ENCODE measurements at regions of chr4 and their contacts with region 1.

Region 1: DNA sequence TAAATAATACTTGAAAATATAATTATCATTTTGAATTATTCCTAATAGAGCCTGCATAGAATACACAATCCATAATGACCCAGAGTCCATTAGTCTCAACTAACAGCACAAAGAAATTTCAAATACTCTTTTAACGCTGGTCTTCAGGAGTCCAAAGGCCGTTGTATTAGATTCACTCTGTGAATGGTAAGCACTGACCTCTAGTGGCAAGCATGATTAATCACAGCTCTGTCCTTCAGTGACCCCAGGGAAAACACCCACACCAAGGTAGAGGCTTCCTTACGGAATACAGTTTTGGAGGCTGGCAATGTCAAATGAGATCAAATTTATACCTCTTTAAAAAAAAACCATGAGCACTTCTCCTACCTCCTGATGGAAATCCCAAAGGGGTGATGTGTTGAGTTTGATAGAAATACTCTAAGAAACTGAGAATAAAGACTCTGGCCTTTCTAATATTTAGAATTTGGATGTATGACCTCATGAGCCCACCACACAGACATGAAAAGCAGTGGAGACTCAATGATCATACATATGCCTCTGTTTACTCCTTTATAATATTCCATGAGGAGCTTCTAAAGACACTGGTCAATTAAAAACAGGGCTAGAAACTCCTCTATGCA is 147.2 kb upstream of the DKK2 start:
- DNase-seq: peak; percentile 23
- H3K4me3 Mint-ChIP-seq: no peak overlapping the region
- H3K27ac Mint-ChIP-seq: no peak overlapping the region
- H3K4me1 Mint-ChIP-seq: no peaks in the 10 kb centered on the region
- H3K27me3 Mint-ChIP-seq: no peaks in the 10 kb centered on the region
- CTCF ChIP-seq: peak; percentile 18

Region 2: GRCh38 chr4:107044170-107044569 is 139.1 kb before region 1 on chr4:
- CTCF ChIA-PET with region 1: interaction called, 8 read pairs
- intact Hi-C with region 1: loop called (anchors 1 kb)
- DNase-seq: no peak
- H3K4me3 Mint-ChIP-seq: no peak overlapping the region
- H3K27ac Mint-ChIP-seq: no peak overlapping the region
- H3K4me1 Mint-ChIP-seq: no peaks in the 10 kb centered on the region
- H3K27me3 Mint-ChIP-seq: no peaks in the 10 kb centered on the region
- CTCF ChIP-seq: no peak

Region 3: GRCh38 chr4:107094332-107094731 is 88.9 kb before region 1 on chr4:
- CTCF ChIA-PET with region 1: interaction called, 5 read pairs
- intact Hi-C with region 1: loop called (anchors 1 kb)
- DNase-seq: no peak
- H3K4me3 Mint-ChIP-seq: no peak overlapping the region
- H3K27ac Mint-ChIP-seq: no peak overlapping the region
- H3K4me1 Mint-ChIP-seq: no peaks in the 10 kb centered on the region
- H3K27me3 Mint-ChIP-seq: no peaks in the 10 kb centered on the region
- CTCF ChIP-seq: peak; percentile 18

Region 4: DNA sequence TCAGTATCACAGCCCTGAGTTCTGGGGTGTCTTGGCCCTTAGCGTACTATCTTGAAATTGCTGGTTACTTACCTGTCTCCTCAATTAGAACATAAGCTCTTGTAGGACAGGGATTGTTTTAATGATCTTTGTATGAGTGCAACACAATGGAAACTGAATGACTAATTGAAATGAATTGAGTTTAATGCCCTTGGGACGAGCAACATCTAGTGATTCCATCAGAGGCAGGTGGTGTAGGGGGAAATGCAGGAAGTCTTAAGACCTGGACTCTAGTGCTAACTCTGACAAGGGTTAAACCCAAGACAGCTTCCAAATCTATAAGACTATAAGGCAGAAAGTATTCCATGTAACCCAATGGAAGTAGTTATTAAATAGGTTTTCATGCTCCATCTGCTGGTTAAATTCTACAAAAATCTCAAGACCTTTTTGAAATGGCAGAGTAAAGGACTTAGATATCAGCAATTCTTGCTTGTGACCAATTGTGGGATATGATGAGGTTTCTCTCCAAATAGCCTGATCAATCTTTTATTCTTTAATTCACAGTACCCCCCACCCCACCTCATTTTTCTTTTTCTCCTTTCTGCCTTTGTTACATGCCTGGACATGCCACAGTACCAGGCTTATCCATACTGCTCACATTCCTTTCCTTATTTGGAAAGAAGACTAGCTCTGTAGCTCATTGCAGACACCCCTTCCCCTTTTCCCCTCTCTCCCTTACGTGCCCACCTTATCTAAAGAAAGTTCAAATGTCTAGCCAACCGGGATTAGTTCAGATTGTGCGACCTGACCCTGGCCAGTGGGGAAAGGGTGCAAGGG is 196.0 kb after region 1 on chr4:
- CTCF ChIA-PET with region 1: no interaction called
- intact Hi-C with region 1: loop called (anchors 10 kb)
- DNase-seq: no peak
- H3K4me3 Mint-ChIP-seq: no peak overlapping the region
- H3K27ac Mint-ChIP-seq: no peak overlapping the region
- H3K4me1 Mint-ChIP-seq: no peaks in the 10 kb centered on the region
- H3K27me3 Mint-ChIP-seq: no peaks in the 10 kb centered on the region
- CTCF ChIP-seq: no peak

Region 5: DNA sequence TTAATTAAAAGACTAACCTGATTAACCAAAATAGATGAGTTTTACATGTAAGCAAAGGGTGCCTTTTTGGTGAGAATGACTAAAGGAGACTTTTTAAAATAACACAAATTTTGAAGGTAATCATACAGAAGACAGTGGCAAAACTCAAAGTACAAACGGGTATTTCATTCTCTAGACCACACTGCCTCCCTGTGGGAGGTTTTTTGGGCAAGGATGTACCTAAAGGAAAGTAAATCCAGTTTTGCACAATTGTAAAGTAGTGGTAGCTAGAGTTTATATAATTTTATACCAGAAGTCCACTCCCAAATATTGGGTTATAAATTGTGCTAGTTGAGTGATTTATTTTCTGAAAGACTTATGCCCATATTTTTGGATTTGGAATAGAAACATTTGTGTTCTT is 335.8 kb after region 1 on chr4:
- CTCF ChIA-PET with region 1: no interaction called
- intact Hi-C with region 1: loop called (anchors 10 kb)
- DNase-seq: peak; percentile 27
- H3K4me3 Mint-ChIP-seq: no peak overlapping the region
- H3K27ac Mint-ChIP-seq: no peak overlapping the region
- H3K4me1 Mint-ChIP-seq: no peaks in the 10 kb centered on the region
- H3K27me3 Mint-ChIP-seq: no peaks in the 10 kb centered on the region
- CTCF ChIP-seq: no peak